MCF 10A (cell line): ENCODE measurements at regions of chr12 and their contacts with region 1.

Region 1: DNA sequence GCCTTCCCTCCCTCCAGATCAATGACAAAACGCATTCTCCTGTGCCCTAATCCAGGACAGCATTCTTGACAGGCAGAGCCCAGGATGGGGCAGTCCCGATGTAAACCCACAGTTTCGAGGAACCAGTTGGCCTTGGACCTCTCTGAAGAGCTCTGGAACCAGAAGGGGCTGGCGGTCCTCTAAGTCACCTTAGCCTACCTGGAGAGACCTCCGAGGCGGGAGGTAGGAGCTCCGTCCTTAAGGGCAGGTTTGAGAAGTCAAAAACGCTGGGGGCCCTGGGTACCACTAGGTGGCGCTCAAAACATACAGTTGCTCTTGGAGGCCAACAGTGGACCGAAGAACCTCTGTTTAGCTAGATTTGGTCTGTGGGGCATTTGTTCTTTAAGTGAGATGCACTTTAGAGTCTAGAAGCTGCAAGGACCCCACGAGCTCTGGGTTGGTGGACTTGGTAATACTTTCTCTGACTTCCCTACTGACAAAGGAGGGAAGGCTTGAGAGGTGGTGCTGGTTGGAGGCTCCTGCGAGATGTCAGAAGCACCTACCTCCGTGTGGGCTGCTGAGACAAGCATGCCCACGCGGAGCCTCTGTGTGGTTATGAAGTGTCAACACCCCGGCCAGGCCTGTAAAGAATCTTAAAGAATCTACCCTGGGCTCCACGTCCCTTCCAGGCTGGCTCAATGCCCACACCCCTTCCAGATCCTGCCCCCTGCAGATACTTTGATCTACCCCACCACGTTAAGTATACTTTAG is 74.8 kb upstream of the CHST11 start:
- DNase-seq: peak; percentile 87
- H3K4me3 Mint-ChIP-seq: no peak overlapping the region
- H3K27ac Mint-ChIP-seq: no peak overlapping the region
- H3K4me1 Mint-ChIP-seq: peaks cover 10% of the 10 kb centered on the region
- H3K27me3 Mint-ChIP-seq: peaks cover 11% of the 10 kb centered on the region
- CTCF ChIP-seq: peak; percentile 92

Region 2: GRCh38 chr12:104276273-104277131 is 105.4 kb before region 1 on chr12:
- CTCF ChIA-PET with region 1: no interaction called
- POLR2A ChIA-PET with region 1: no interaction called
- intact Hi-C with region 1: no loop called
- DNase-seq: no peak
- H3K4me3 Mint-ChIP-seq: peak overlapping the region; percentile 27
- H3K27ac Mint-ChIP-seq: peak overlapping the region; percentile 69
- H3K4me1 Mint-ChIP-seq: peaks cover 40% of the 10 kb centered on the region
- H3K27me3 Mint-ChIP-seq: no peaks in the 10 kb centered on the region
- CTCF ChIP-seq: no peak

Region 3: DNA sequence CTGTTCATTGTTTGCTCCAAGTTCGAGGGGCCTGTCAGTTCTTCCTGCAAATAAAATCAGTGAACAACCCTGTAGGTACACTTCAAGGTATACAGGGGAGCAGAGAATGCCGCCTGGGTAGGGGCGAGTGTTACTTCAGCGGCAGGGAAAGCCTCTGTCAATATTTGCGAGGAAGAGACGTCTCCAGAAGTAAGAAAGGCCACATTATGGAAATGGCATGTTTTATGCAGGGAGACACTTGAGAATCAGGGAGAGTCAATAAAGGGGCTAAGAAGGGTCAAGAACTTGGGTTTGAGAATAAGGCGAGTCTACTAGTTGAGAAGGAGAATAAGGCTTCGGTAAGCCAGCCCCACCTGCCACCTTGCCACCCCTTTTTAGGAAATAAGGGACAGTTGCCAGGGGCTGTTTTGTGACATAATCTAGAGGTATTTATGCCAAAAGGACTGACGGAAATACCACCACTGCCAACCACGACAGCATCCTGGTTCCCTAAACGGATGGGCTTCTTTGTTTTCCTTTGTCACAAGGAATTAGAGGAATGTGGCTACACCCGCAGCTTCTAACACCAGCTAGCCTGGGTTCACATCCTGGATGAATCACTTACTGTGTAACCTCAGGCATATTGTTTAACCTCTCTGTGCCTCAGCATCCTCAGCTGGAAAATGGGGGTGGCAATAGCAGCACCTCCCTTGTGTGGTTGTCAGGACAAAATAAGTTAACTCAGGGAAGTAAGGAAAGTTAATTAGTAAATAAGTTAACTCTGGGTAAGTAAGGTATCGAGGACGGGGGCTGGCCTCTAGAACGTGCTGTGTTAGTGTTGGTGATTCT is 10.6 kb before region 1 on chr12:
- CTCF ChIA-PET with region 1: interaction called, 19 read pairs
- POLR2A ChIA-PET with region 1: interaction called, 5 read pairs
- intact Hi-C with region 1: no loop called
- DNase-seq: peak; percentile 36
- H3K4me3 Mint-ChIP-seq: no peak overlapping the region
- H3K27ac Mint-ChIP-seq: no peak overlapping the region
- H3K4me1 Mint-ChIP-seq: no peaks in the 10 kb centered on the region
- H3K27me3 Mint-ChIP-seq: no peaks in the 10 kb centered on the region
- CTCF ChIP-seq: no peak

Region 4: GRCh38 chr12:104414513-104415295 is 32.8 kb after region 1 on chr12:
- CTCF ChIA-PET with region 1: no interaction called
- POLR2A ChIA-PET with region 1: no interaction called
- intact Hi-C with region 1: no loop called
- DNase-seq: peak; percentile 5
- H3K4me3 Mint-ChIP-seq: no peak overlapping the region
- H3K27ac Mint-ChIP-seq: no peak overlapping the region
- H3K4me1 Mint-ChIP-seq: no peaks in the 10 kb centered on the region
- H3K27me3 Mint-ChIP-seq: no peaks in the 10 kb centered on the region
- CTCF ChIP-seq: no peak

Region 5: DNA sequence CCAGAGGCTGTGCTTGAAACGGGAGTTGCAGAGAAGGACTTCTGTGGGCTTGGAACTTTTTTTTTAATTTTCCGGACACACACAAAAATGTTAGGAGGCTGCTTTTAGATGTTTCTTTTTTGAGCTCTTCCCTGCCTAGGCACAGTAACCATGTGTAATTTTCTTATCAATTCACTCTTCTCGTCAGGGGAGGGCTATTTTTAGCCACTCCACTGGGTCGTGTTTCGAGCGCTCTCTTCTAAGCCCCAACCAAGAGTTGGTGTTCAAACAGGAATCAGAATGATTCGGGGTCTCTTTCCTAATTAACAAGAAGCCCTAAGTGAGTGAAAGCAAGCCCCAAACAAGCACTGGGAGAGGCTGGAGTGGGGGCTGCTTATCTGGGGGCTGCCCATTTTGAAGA is 237.4 kb after region 1 on chr12:
- CTCF ChIA-PET with region 1: no interaction called
- POLR2A ChIA-PET with region 1: no interaction called
- intact Hi-C with region 1: no loop called
- DNase-seq: no peak
- H3K4me3 Mint-ChIP-seq: no peak overlapping the region
- H3K27ac Mint-ChIP-seq: no peak overlapping the region
- H3K4me1 Mint-ChIP-seq: no peaks in the 10 kb centered on the region
- H3K27me3 Mint-ChIP-seq: no peaks in the 10 kb centered on the region
- CTCF ChIP-seq: no peak

Region 6: GRCh38 chr12:104695453-104696148 is 313.7 kb after region 1 on chr12:
- CTCF ChIA-PET with region 1: interaction called, 3 read pairs
- POLR2A ChIA-PET with region 1: no interaction called
- intact Hi-C with region 1: loop called (anchors 5 kb)
- DNase-seq: no peak
- H3K4me3 Mint-ChIP-seq: no peak overlapping the region
- H3K27ac Mint-ChIP-seq: no peak overlapping the region
- H3K4me1 Mint-ChIP-seq: no peaks in the 10 kb centered on the region
- H3K27me3 Mint-ChIP-seq: no peaks in the 10 kb centered on the region
- CTCF ChIP-seq: no peak

Region 7: GRCh38 chr12:104877123-104877705 is 495.3 kb after region 1 on chr12:
- CTCF ChIA-PET with region 1: interaction called, 34 read pairs
- POLR2A ChIA-PET with region 1: interaction called, 4 read pairs
- intact Hi-C with region 1: loop called (anchors 1 kb)
- DNase-seq: peak; percentile 40
- H3K4me3 Mint-ChIP-seq: no peak overlapping the region
- H3K27ac Mint-ChIP-seq: no peak overlapping the region
- H3K4me1 Mint-ChIP-seq: no peaks in the 10 kb centered on the region
- H3K27me3 Mint-ChIP-seq: no peaks in the 10 kb centered on the region
- CTCF ChIP-seq: peak; percentile 54

Region 8: DNA sequence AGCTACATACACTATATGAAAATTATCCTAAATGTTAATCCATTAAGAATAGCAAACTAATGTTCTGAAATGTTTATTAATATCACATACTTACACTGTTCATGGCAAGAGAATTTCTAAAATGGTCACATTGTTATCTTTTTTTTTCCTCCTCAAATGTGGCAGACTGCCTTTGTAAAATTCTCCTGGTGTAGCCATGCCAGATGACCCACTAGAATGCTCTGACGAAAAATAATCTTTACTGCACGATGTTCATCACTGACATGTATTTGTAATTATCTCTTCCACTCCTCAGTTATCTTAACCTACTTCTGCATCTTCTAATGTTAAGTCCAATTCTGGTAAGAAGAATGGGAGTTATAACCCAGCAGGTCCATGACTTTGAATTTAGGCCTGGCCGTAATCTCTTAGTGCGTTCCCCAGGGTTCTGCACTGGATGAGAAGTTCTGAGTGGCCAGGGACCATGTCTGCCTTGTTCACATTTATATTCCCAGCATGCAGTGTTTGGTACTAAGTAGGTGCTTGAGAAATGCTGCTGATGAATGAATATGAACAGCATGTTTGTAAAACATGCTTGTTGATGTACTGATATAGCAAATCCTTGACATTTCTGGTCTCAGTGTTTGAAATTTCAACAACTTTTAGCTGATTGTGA is 650.9 kb after region 1 on chr12:
- CTCF ChIA-PET with region 1: interaction called, 13 read pairs
- POLR2A ChIA-PET with region 1: no interaction called
- intact Hi-C with region 1: no loop called
- DNase-seq: no peak
- H3K4me3 Mint-ChIP-seq: no peak overlapping the region
- H3K27ac Mint-ChIP-seq: peak overlapping the region; percentile 22
- H3K4me1 Mint-ChIP-seq: no peaks in the 10 kb centered on the region
- H3K27me3 Mint-ChIP-seq: no peaks in the 10 kb centered on the region
- CTCF ChIP-seq: no peak